ENCODE measurements at regions of chr6 and their contacts with region 1.

Region 1: DNA sequence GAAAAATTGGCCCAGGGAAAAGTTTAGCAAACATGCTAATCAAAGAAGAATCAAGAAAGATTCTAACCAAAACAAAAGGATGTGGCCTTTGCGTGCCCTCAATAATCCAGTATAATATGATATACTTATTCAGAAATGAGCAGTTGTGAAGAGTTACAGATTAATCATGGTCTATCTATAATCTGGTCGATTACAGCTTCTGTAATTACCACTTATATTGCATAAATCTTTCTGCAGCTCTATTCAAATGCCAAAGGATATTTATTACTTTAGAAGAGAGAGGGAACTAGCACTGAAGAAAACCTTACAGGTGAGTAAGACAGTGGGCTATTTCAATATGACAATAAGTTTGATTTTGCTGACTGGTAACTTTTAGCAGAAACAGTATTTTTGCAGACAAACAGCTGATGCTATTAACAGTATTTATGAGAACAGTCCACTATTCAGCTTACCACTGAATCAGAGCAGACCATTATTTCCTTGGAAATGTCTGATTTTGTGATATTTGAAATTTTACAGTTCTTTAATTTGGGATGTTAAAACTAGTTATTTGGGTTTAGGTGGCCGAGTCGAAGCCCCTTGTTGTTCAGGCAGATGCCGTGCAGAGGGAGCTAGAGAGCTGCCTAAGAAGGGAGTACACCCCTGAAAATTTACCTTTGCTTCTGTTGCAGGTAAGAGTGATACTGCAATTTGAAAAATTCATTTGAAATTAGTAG is 92.2 kb downstream of the CEP57L1 start:
- DNase-seq: peak; percentile 72
- ATAC-seq: peak; percentile 81
- H3K4me3 Mint-ChIP-seq: no peak overlapping the region
- H3K27ac Mint-ChIP-seq: no peak overlapping the region
- H3K4me1 Mint-ChIP-seq: peaks cover 12% of the 10 kb centered on the region
- H3K27me3 Mint-ChIP-seq: peaks cover 37% of the 10 kb centered on the region

Region 2: DNA sequence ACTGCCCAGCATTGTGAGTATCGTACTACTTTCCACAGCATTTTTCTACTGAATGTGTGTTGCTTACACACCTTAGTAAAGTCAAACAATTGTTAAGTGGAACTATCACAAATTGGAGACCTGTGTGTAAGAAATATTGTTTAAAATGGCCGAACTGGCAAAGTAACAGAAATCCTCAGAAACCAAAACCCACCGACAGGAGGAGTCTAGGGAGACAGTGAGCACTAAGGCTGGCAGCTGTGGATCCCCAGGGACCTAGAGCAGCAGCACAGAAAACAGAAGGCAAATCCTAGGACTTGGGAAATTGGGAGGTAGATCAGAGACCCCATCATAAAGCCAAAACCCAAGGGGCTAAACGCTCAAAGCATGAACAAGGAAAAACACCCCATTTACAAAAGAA is 162.8 kb before region 1 on chr6:
- CTCF ChIA-PET with region 1: no interaction called
- POLR2A ChIA-PET with region 1: no interaction called
- DNase-seq: no peak
- ATAC-seq: no peak
- H3K4me3 Mint-ChIP-seq: no peak overlapping the region
- H3K27ac Mint-ChIP-seq: no peak overlapping the region
- H3K4me1 Mint-ChIP-seq: peaks cover 13% of the 10 kb centered on the region
- H3K27me3 Mint-ChIP-seq: peaks cover 2% of the 10 kb centered on the region

Region 3: GRCh38 chr6:109139109-109139508 is 48.4 kb before region 1 on chr6:
- CTCF ChIA-PET with region 1: no interaction called
- POLR2A ChIA-PET with region 1: no interaction called
- DNase-seq: no peak
- ATAC-seq: no peak
- H3K4me3 Mint-ChIP-seq: no peak overlapping the region
- H3K27ac Mint-ChIP-seq: no peak overlapping the region
- H3K4me1 Mint-ChIP-seq: peaks cover 3% of the 10 kb centered on the region
- H3K27me3 Mint-ChIP-seq: no peaks in the 10 kb centered on the region

Region 4: GRCh38 chr6:109236115-109237076 is 48.8 kb after region 1 on chr6:
- CTCF ChIA-PET with region 1: interaction called, 17 read pairs
- POLR2A ChIA-PET with region 1: no interaction called
- DNase-seq: peak; percentile 60
- ATAC-seq: peak; percentile 82
- H3K4me3 Mint-ChIP-seq: no peak overlapping the region
- H3K27ac Mint-ChIP-seq: peak overlapping the region; percentile 77
- H3K4me1 Mint-ChIP-seq: peaks cover 27% of the 10 kb centered on the region
- H3K27me3 Mint-ChIP-seq: peaks cover 2% of the 10 kb centered on the region

Region 5: GRCh38 chr6:109328629-109329028 is 141.1 kb after region 1 on chr6:
- CTCF ChIA-PET with region 1: no interaction called
- POLR2A ChIA-PET with region 1: no interaction called
- DNase-seq: no peak
- ATAC-seq: no peak
- H3K4me3 Mint-ChIP-seq: no peak overlapping the region
- H3K27ac Mint-ChIP-seq: no peak overlapping the region
- H3K4me1 Mint-ChIP-seq: peaks cover 13% of the 10 kb centered on the region
- H3K27me3 Mint-ChIP-seq: peaks cover 2% of the 10 kb centered on the region

Region 6: GRCh38 chr6:109373762-109374161 is 186.2 kb after region 1 on chr6:
- CTCF ChIA-PET with region 1: interaction called, 14 read pairs
- POLR2A ChIA-PET with region 1: no interaction called
- DNase-seq: peak; percentile 48
- ATAC-seq: peak; percentile 80
- H3K4me3 Mint-ChIP-seq: peak overlapping the region; percentile 21
- H3K27ac Mint-ChIP-seq: peak overlapping the region; percentile 78
- H3K4me1 Mint-ChIP-seq: peaks cover 70% of the 10 kb centered on the region
- H3K27me3 Mint-ChIP-seq: no peaks in the 10 kb centered on the region

Region 7: GRCh38 chr6:109389650-109390274 is 202.2 kb after region 1 on chr6:
- CTCF ChIA-PET with region 1: interaction called, 111 read pairs
- POLR2A ChIA-PET with region 1: interaction called, 40 read pairs
- DNase-seq: no peak
- ATAC-seq: no peak
- H3K4me3 Mint-ChIP-seq: no peak overlapping the region
- H3K27ac Mint-ChIP-seq: no peak overlapping the region
- H3K4me1 Mint-ChIP-seq: peaks cover 11% of the 10 kb centered on the region
- H3K27me3 Mint-ChIP-seq: peaks cover 5% of the 10 kb centered on the region

Measured in activated CD8-positive, alpha-beta T cell treated with anti-CD3 and anti-CD28 coated beads, Interleukin-2, amount 10 ng/mL, durations not matched to agents 7 days and 5 days (primary cell).